CD8-positive, alpha-beta T cell (primary cell): ENCODE measurements at regions of chr15 and their contacts with region 1.

Region 1: DNA sequence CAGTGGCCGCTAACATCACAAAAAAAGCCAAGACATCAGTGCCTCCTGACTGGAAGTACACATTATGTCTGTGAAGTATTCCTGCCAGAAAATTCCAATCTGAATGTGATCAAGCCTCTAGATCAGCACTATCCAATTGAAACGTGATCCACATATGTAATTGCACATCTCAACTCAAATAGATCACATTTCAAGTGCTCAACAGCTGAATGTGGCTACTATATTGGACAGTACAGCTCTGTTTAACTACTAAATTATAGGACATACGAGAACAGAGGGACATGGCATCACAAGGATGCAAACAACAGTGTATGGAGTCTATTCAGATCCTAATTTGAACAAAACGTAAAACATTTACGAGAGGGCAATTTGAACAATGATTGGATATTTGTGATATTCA is 542 bp upstream of the UBAP1L start:
- DNase-seq: no peak
- ATAC-seq: no peak
- H3K4me3 ChIP-seq: no peak overlapping the region
- H3K4me3 Mint-ChIP-seq: no peak overlapping the region
- H3K27ac ChIP-seq: no peak overlapping the region
- H3K27ac Mint-ChIP-seq: no peak overlapping the region
- H3K4me1 ChIP-seq: no peaks in the 10 kb centered on the region
- H3K4me1 Mint-ChIP-seq: no peaks in the 10 kb centered on the region
- H3K27me3 ChIP-seq: no peaks in the 10 kb centered on the region
- H3K27me3 Mint-ChIP-seq: no peaks in the 10 kb centered on the region
- CTCF ChIP-seq: no peak

Region 2: DNA sequence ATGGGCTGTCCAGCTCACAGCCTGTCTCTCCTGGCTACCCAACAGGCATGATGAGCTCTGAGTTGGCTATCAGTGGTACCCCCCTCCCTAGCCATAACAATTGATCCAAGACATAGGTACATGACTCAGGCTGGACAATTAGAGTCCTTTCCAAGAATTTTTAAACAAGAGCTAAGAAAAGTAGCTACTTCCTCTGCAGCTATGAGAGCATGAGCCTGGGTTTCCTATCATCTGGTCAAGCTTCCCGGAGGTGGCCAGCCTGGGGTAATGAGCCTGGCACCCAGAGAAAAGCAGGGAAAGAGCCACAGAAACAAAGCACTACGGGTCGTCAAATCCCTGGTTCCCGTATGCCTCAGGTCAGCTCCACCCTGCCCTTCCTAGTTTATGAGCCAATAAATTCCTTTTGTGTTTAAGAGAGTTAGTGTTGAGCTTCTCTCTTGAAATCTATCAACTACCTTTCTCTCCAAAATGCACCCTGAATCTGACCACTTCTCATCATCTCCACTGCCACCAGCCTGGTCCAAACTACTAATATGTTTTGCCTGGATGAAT is 72.7 kb before region 1 on chr15:
- CTCF ChIA-PET with region 1: no interaction called
- POLR2A ChIA-PET with region 1: no interaction called
- intact Hi-C with region 1: no loop called
- DNase-seq: peak in 1 of 9 experiments; percentile 17
- ATAC-seq: no peak
- H3K4me3 ChIP-seq: no peak overlapping the region
- H3K4me3 Mint-ChIP-seq: no peak overlapping the region
- H3K27ac ChIP-seq: no peak overlapping the region
- H3K27ac Mint-ChIP-seq: no peak overlapping the region
- H3K4me1 ChIP-seq: no peaks in the 10 kb centered on the region
- H3K4me1 Mint-ChIP-seq: no peaks in the 10 kb centered on the region
- H3K27me3 ChIP-seq: no peaks in the 10 kb centered on the region
- H3K27me3 Mint-ChIP-seq: peaks cover 4% of the 10 kb centered on the region
- CTCF ChIP-seq: no peak

Region 3: GRCh38 chr15:65101411-65101890 is 14.1 kb before region 1 on chr15:
- CTCF ChIA-PET with region 1: interaction called, 10 read pairs
- POLR2A ChIA-PET with region 1: no interaction called
- intact Hi-C with region 1: no loop called
- DNase-seq: peak in 8 of 9 experiments; percentile 8 to 56 (median 44)
- ATAC-seq: no peak
- H3K4me3 ChIP-seq: no peak overlapping the region
- H3K4me3 Mint-ChIP-seq: no peak overlapping the region
- H3K27ac ChIP-seq: no peak overlapping the region
- H3K27ac Mint-ChIP-seq: no peak overlapping the region
- H3K4me1 ChIP-seq: no peaks in the 10 kb centered on the region
- H3K4me1 Mint-ChIP-seq: no peaks in the 10 kb centered on the region
- H3K27me3 ChIP-seq: no peaks in the 10 kb centered on the region
- H3K27me3 Mint-ChIP-seq: no peaks in the 10 kb centered on the region
- CTCF ChIP-seq: peak; percentile 19